ENCODE measurements at regions of chr17 and their contacts with region 1.

Region 1: GRCh38 chr17:45161019-45161825 is 453 bp upstream of the HEXIM2 start:
- DNase-seq: peak; percentile 97
- ATAC-seq: peak; percentile 97
- H3K4me3 Mint-ChIP-seq: peak overlapping the region; percentile 96
- H3K27ac Mint-ChIP-seq: peak overlapping the region; percentile 96
- H3K4me1 Mint-ChIP-seq: peaks cover 26% of the 10 kb centered on the region
- H3K27me3 Mint-ChIP-seq: no peaks in the 10 kb centered on the region

Region 2: GRCh38 chr17:45051060-45051719 is 110.0 kb before region 1 on chr17 and contains the start of gene DCAKD:
- CTCF ChIA-PET with region 1: interaction called, 3 read pairs
- POLR2A ChIA-PET with region 1: interaction called, 4 read pairs
- intact Hi-C with region 1: loop called in 1 of 2 experiments (anchors 1 kb)
- DNase-seq: peak; percentile 96
- ATAC-seq: peak; percentile 97
- H3K4me3 Mint-ChIP-seq: peak within 1 kb of the TSS; percentile 87
- H3K27ac Mint-ChIP-seq: peak within 1 kb of the TSS; percentile 95
- H3K4me1 Mint-ChIP-seq: peaks cover 50% of the 10 kb centered on the region
- H3K27me3 Mint-ChIP-seq: no peaks in the 10 kb centered on the region
- total RNA-seq, gene DCAKD: 34.8 to 36.2 TPM

Region 3: GRCh38 chr17:45148183-45149036 is 12.8 kb before region 1 on chr17 and contains the start of gene HEXIM1:
- CTCF ChIA-PET with region 1: interaction called, 139 read pairs
- POLR2A ChIA-PET with region 1: interaction called, 247 read pairs
- intact Hi-C with region 1: loop called (anchors 1 kb)
- DNase-seq: peak; percentile 99
- ATAC-seq: peak; percentile 78
- H3K4me3 Mint-ChIP-seq: peak within 1 kb of the TSS; percentile 99
- H3K27ac Mint-ChIP-seq: peak within 1 kb of the TSS; percentile 100
- H3K4me1 Mint-ChIP-seq: peaks cover 37% of the 10 kb centered on the region
- H3K27me3 Mint-ChIP-seq: no peaks in the 10 kb centered on the region
- total RNA-seq, gene HEXIM1: 27.1 to 27.3 TPM

Region 4: GRCh38 chr17:45197555-45198334 is 36.5 kb after region 1 on chr17:
- CTCF ChIA-PET with region 1: interaction called, 9 read pairs
- POLR2A ChIA-PET with region 1: no interaction called
- intact Hi-C with region 1: loop called in 1 of 2 experiments (anchors 5 kb)
- DNase-seq: peak; percentile 95
- ATAC-seq: peak; percentile 100
- H3K4me3 Mint-ChIP-seq: no peak overlapping the region
- H3K27ac Mint-ChIP-seq: no peak overlapping the region
- H3K4me1 Mint-ChIP-seq: peaks cover 2% of the 10 kb centered on the region
- H3K27me3 Mint-ChIP-seq: no peaks in the 10 kb centered on the region

Region 5: DNA sequence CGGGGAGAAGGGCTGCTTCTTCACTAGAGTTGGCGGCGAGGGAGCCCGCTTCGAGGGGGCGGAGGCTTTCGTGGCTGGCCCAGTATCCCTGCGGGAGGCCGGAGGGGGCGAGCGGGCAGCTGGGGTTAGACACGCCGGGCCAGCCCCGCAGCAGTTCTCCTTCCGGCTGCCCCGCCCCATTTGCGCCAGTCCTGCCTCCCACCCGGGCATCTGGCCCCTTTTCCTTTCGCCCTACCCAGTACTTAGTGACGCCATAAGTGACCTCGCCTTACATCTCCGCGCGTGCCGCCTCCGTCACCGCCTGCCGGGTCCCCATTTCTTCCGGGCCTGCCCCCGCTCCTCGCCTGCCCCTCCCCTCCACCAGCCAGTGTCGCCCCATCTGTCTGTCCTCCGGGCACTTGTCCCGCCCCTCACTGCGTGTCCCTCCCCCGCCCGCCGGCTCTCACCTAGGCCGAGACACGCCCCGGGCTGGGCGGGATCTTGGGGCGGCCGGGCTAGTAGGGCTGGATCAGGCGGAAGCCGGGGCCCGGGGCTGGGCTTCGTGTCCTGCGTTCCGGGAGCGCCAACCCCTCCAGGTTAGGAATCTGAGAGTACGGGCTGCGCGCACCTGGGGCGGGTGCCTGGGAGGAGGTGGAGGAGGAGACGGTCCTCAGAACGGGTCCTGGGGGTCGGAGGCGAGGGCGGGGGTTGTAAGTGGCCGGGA is 86.4 kb after region 1 on chr17:
- CTCF ChIA-PET with region 1: no interaction called
- POLR2A ChIA-PET with region 1: no interaction called
- intact Hi-C with region 1: loop called in 1 of 2 experiments (anchors 1 kb)
- DNase-seq: peak; percentile 99
- ATAC-seq: peak; percentile 89
- H3K4me3 Mint-ChIP-seq: peak overlapping the region; percentile 83
- H3K27ac Mint-ChIP-seq: peak overlapping the region; percentile 92
- H3K4me1 Mint-ChIP-seq: peaks cover 57% of the 10 kb centered on the region
- H3K27me3 Mint-ChIP-seq: no peaks in the 10 kb centered on the region

Region 6: GRCh38 chr17:45317112-45317928 is 156.1 kb after region 1 on chr17:
- CTCF ChIA-PET with region 1: interaction called, 6 read pairs
- POLR2A ChIA-PET with region 1: interaction called, 10 read pairs
- intact Hi-C with region 1: loop called in 1 of 2 experiments (anchors 1 kb)
- DNase-seq: peak; percentile 100
- ATAC-seq: peak; percentile 81
- H3K4me3 Mint-ChIP-seq: peak overlapping the region; percentile 91
- H3K27ac Mint-ChIP-seq: peak overlapping the region; percentile 89
- H3K4me1 Mint-ChIP-seq: peaks cover 65% of the 10 kb centered on the region
- H3K27me3 Mint-ChIP-seq: no peaks in the 10 kb centered on the region